Lower leg skin (tissue), 4 donors: ENCODE measurements at regions of chr6 and their contacts with region 1.

Region 1: GRCh38 chr6:46848684-46849360 is 55.6 kb downstream of the MEP1A start:
- DNase-seq: peak; percentile 71 to 97
- H3K4me3 ChIP-seq: no peak overlapping the region
- CTCF ChIP-seq: peak in 1 of 3 donors; percentile 87
- POLR2A ChIP-seq: no peak

Region 2: DNA sequence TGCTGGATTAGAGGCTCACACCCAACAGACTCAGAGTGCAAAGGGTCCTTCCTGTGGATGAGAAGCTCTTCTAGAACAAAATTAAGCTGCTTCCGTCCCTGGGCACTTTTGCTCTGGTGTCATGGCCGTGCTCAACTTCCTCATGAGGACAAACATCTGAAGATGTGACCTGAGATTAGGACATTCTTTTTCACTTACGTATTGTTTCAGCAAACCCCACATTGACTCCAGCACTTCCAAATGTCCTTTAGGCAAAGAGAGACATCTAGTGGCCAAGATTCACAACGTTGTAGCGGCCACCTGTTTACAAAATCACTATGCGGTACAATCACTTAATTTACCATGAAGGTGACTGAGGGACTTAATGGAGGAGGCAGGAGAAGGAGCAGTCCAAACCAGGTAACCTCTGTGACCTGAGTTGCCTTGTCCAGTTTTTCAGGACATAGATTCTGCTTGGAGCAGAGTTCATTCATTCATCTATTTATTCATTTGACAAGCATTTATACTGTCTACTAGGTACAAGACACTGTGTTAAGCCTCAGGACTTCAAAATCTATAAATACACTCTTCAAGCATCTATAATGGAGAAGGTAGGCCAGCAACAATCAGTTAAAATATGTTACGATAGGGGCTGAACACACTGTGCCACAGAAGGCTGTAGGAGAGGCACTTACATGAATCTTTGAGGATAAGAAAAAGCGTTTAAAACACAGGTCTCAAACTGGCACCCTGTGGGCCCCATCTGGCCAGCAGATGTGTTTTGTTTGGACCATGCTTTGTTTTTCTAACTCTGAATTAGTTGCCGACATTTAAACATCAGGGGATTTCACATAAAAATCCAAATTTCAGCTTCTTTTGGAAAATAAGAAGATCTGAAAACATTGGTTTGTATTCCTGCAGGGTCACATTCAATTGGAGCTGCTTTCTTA is 198.9 kb after region 1 on chr6:
- intact Hi-C with region 1: loop called (anchors 10 kb)
- DNase-seq: peak in 1 of 2 donors; percentile 48
- H3K4me3 ChIP-seq: no peak overlapping the region
- CTCF ChIP-seq: peak in 1 of 3 donors; percentile 41
- POLR2A ChIP-seq: no peak